CD8-positive, alpha-beta T cell (primary cell): ENCODE measurements at regions of chr7 and their contacts with region 1.

Region 1: DNA sequence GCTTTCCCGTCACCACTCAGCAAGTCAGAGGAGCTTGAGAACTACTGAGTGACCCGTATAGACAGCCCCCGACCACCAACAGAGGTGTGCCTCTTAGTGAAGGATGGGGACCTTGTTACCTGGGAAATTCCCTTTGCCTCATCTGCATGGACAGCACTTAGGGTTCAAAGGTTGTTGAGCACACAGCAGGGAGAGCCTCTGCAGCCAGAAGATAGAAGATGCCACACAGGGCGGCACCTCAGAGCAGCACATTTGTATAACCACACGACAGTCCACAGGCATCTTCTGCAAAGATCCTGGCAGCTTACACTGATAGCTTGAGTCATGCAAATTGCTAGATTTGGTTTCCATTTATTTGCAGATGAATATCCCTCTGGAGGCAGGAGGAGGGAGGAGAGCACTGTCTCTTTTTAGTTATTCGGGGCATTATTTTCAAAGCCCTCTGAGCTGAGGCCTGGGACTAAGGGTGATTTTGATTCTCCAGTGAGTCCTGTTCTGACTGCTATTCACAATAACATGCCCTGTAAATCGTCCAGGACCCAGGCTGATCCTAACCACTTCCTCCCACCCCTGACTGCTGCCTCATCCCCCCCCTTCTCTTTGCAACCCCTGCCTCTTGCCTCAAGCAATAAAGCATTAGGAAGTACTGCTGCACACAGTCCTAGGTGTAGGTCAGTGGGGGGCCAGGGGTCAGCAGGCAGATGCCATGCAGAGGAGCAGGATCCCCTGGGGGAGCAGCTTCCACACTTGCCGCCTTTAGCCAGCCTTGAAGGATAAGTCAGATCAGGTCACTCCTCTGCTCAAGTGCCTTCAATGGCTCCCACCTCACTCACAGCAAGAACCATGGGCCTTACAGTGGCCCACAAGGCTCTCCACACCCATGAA is 24.6 kb upstream of the INMT start:
- DNase-seq: peak; percentile 21 to 83 (median 64)
- ATAC-seq: peak; percentile 91
- H3K4me3 ChIP-seq: peak overlapping the region; percentile 49 to 53
- H3K4me3 Mint-ChIP-seq: peak overlapping the region; percentile 85
- H3K27ac ChIP-seq: peak overlapping the region; percentile 55 to 68
- H3K27ac Mint-ChIP-seq: peak overlapping the region; percentile 94
- H3K4me1 ChIP-seq: peaks cover 49% of the 10 kb centered on the region
- H3K4me1 Mint-ChIP-seq: peaks cover 75% of the 10 kb centered on the region
- H3K27me3 ChIP-seq: no peaks in the 10 kb centered on the region
- H3K27me3 Mint-ChIP-seq: no peaks in the 10 kb centered on the region
- CTCF ChIP-seq: no peak

Region 2: DNA sequence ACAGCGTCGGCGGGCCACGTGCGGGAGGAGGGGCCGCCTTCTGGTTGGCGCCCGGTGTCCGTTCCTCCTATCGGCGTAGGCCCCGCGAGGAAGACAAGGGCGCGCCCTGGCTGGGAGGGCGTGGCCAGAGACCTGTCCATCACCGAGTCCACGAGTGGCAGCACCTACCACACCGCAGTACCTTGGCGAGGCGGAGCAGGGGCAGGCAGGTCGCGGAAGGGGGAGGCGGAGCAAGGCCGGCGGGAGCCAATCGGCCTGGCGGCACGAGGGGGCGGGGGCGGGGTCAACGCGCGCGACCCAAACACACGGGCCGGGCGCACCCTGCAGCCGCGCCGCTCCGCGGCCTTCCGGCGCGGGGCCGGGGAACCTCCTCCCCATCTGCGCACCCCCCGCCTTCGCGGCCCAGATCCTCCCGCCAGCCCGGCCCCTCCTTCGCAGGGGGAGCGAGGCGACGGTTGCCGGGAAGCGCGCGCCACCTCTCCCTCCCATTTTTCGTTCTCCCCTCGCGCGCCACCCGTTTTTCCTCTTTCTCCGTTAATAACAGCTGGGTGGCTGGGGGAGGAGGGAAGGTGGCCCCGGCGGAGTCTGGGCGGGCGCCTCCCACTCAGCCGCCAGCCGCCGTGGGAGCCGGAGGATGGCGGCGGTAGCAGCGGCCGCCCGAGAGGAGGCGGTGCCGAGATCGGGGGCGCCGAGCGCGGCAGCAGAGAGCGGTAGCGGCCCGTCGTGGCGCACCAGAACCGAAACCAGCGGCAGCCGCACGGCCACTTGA is 442.8 kb before region 1 on chr7 and contains the start of gene ZNRF2:
- CTCF ChIA-PET with region 1: no interaction called
- POLR2A ChIA-PET with region 1: no interaction called
- intact Hi-C with region 1: no loop called
- DNase-seq: peak; percentile 97 to 100 (median 99)
- ATAC-seq: peak; percentile 83
- H3K4me3 ChIP-seq: peak within 1 kb of the TSS; percentile 45 to 75
- H3K4me3 Mint-ChIP-seq: peak within 1 kb of the TSS; percentile 87
- H3K27ac ChIP-seq: peak within 1 kb of the TSS; percentile 76 to 80
- H3K27ac Mint-ChIP-seq: peak within 1 kb of the TSS; percentile 92
- H3K4me1 ChIP-seq: peaks cover 23% of the 10 kb centered on the region
- H3K4me1 Mint-ChIP-seq: peaks cover 40% of the 10 kb centered on the region
- H3K27me3 ChIP-seq: no peaks in the 10 kb centered on the region
- H3K27me3 Mint-ChIP-seq: no peaks in the 10 kb centered on the region
- CTCF ChIP-seq: peak; percentile 46
- total RNA-seq, gene ZNRF2: 20.1 to 26.1 TPM

Region 3: GRCh38 chr7:30682212-30683083 is 44.9 kb before region 1 on chr7 and contains the start of gene CRHR2:
- CTCF ChIA-PET with region 1: interaction called, 4 read pairs
- POLR2A ChIA-PET with region 1: no interaction called
- intact Hi-C with region 1: loop called in 1 of 2 experiments (anchors 1 kb)
- DNase-seq: peak in 7 of 9 experiments; percentile 6 to 68 (median 49)
- ATAC-seq: peak; percentile 87
- H3K4me3 ChIP-seq: peak within 1 kb of the TSS; percentile 34 to 40
- H3K4me3 Mint-ChIP-seq: peak within 1 kb of the TSS; percentile 82
- H3K27ac ChIP-seq: no peak within 1 kb of the TSS
- H3K27ac Mint-ChIP-seq: no peak within 1 kb of the TSS
- H3K4me1 ChIP-seq: peaks cover 7% of the 10 kb centered on the region
- H3K4me1 Mint-ChIP-seq: peaks cover 12% of the 10 kb centered on the region
- H3K27me3 ChIP-seq: peaks cover 12 to 14% of the 10 kb centered on the region in 2 experiments
- H3K27me3 Mint-ChIP-seq: peaks cover 55% of the 10 kb centered on the region
- CTCF ChIP-seq: peak; percentile 60
- total RNA-seq, gene CRHR2: 0.11 TPM in 1 of 2 experiments, not detected in the other

Region 4: GRCh38 chr7:30771174-30771879 is 44.0 kb after region 1 on chr7 and contains the start of gene MINDY4:
- CTCF ChIA-PET with region 1: interaction called, 4 read pairs
- POLR2A ChIA-PET with region 1: no interaction called
- intact Hi-C with region 1: loop called in 1 of 2 experiments (anchors 5 kb)
- DNase-seq: peak; percentile 40 to 79 (median 59)
- ATAC-seq: peak; percentile 89
- H3K4me3 ChIP-seq: peak within 1 kb of the TSS; percentile 78 to 85
- H3K4me3 Mint-ChIP-seq: peak within 1 kb of the TSS; percentile 89
- H3K27ac ChIP-seq: peak within 1 kb of the TSS; percentile 56 to 59
- H3K27ac Mint-ChIP-seq: peak within 1 kb of the TSS; percentile 84
- H3K4me1 ChIP-seq: peaks cover 4% of the 10 kb centered on the region
- H3K4me1 Mint-ChIP-seq: peaks cover 6% of the 10 kb centered on the region
- H3K27me3 ChIP-seq: no peaks in the 10 kb centered on the region
- H3K27me3 Mint-ChIP-seq: no peaks in the 10 kb centered on the region
- CTCF ChIP-seq: no peak
- total RNA-seq, gene MINDY4: 0.33 to 0.46 TPM

Region 5: GRCh38 chr7:30831227-30831626 is 103.9 kb after region 1 on chr7:
- CTCF ChIA-PET with region 1: no interaction called
- POLR2A ChIA-PET with region 1: no interaction called
- intact Hi-C with region 1: no loop called
- DNase-seq: no peak
- ATAC-seq: no peak
- H3K4me3 ChIP-seq: no peak overlapping the region
- H3K4me3 Mint-ChIP-seq: no peak overlapping the region
- H3K27ac ChIP-seq: no peak overlapping the region
- H3K27ac Mint-ChIP-seq: no peak overlapping the region
- H3K4me1 ChIP-seq: peaks cover 4% of the 10 kb centered on the region
- H3K4me1 Mint-ChIP-seq: peaks cover 14% of the 10 kb centered on the region
- H3K27me3 ChIP-seq: no peaks in the 10 kb centered on the region
- H3K27me3 Mint-ChIP-seq: no peaks in the 10 kb centered on the region
- CTCF ChIP-seq: no peak